ENCODE measurements at regions of chr20 and their contacts with region 1.

Region 1: DNA sequence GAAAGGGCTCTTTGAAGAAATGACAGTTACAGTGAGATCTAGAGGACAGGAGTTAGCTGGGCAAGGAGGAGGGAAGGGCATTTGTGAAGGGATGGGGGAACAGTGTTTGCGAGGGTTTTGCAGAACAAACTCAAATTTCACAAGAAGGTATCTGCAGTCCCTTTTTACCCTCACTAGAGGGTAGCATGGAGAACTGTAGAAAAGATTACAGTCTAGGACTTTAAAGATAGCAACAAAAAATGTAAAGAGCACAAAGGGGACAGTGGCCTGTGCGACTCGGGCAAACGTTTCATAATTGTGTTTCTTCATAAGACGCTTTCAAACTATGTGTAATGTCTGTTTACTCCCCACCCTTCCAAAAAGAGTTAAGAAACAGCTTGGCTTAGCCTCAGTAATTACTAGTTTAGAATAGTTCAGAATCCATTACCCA is 21.2 kb upstream of the ASXL1 start:
- DNase-seq: no peak
- ATAC-seq: peak; percentile 58
- H3K4me3 ChIP-seq: no peak overlapping the region
- H3K27ac ChIP-seq: no peak overlapping the region
- H3K4me1 ChIP-seq: peaks cover 29% of the 10 kb centered on the region
- H3K27me3 ChIP-seq: no peaks in the 10 kb centered on the region
- CTCF ChIP-seq: peak; percentile 62 to 71 (median 65)
- EP300 ChIP-seq: no peak
- POLR2A ChIP-seq: no peak
- RAD21 ChIP-seq: peak; percentile 78

Region 2: GRCh38 chr20:31987744-31988143 is 349.2 kb before region 1 on chr20:
- CTCF ChIA-PET with region 1: no interaction called
- POLR2A ChIA-PET with region 1: no interaction called
- RAD21 ChIA-PET with region 1: no interaction called
- SMC1A ChIA-PET with region 1: no interaction called
- in situ Hi-C with region 1: no loop called
- intact Hi-C with region 1: no loop called
- DNase-seq: no peak
- ATAC-seq: no peak
- H3K4me3 ChIP-seq: no peak overlapping the region
- H3K27ac ChIP-seq: no peak overlapping the region
- H3K4me1 ChIP-seq: no peaks in the 10 kb centered on the region
- H3K27me3 ChIP-seq: no peaks in the 10 kb centered on the region; a peak in 2 of 4 replicates
- CTCF ChIP-seq: no peak
- EP300 ChIP-seq: no peak
- POLR2A ChIP-seq: no peak
- RAD21 ChIP-seq: no peak

Region 3: GRCh38 chr20:32366380-32366779 is 29.4 kb after region 1 on chr20:
- CTCF ChIA-PET with region 1: interaction called, 5 read pairs
- POLR2A ChIA-PET with region 1: interaction called, 3 read pairs
- RAD21 ChIA-PET with region 1: interaction called, 3 read pairs
- SMC1A ChIA-PET with region 1: interaction called, 23 read pairs
- in situ Hi-C with region 1: no loop called
- intact Hi-C with region 1: no loop called
- DNase-seq: no peak
- ATAC-seq: peak; percentile 43
- H3K4me3 ChIP-seq: 0 out of 2 replicates have a peak overlapping the region, but pooled peaks have one; percentile 32
- H3K27ac ChIP-seq: no peak overlapping the region
- H3K4me1 ChIP-seq: peaks cover 41% of the 10 kb centered on the region
- H3K27me3 ChIP-seq: no peaks in the 10 kb centered on the region
- CTCF ChIP-seq: no peak
- EP300 ChIP-seq: no peak
- POLR2A ChIP-seq: no peak
- RAD21 ChIP-seq: no peak

Measured in GM12878 (cell line).